ENCODE measurements at regions of chr5 and their contacts with region 1.

Region 1: DNA sequence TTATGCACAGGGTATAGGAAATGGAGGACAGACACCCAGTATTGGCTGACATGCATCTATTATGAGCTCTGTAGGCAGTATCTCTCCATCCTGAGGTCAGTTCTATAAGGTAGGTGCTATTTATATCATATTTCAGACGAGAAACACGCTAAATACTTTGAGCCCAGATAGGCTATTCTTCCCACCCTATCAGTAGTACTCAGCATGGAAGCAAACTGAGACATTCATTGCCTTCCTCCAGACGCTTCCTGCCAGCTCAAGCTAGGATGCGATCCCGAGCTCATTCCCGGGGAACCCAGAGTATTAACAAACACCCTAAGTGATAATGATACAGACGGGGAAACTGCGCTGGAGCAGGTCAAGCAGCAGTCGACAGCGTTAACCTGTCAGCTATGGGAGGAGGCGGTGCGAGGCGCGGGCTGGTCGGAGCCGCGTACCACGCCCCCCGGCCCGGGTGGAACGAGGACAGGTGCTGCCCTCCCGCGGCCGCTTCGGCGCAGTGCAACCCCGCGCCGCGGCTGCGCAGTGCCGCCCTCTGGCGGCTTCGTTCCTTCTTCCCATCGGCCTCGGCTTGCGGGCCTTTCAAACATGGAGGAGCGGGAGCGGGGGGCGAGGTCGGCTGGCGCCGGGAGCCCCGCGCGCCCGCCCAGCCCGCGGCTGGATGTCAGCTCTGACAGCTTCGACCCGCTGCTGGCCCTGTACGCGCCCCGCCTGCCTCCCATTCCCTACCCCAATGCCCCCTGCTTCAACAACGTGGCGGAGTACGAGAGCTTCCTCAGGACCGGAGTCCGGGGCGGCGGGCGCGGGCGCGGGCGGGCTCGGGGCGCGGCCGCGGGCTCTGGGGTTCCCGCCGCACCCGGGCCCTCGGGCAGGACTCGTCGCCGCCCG is at the start of gene LSM11:
- DNase-seq: peak; percentile 93
- ATAC-seq: peak; percentile 96
- H3K4me3 Mint-ChIP-seq: peak within 1 kb of the TSS; percentile 95
- H3K27ac Mint-ChIP-seq: peak within 1 kb of the TSS; percentile 87
- H3K4me1 Mint-ChIP-seq: peaks cover 36% of the 10 kb centered on the region
- H3K27me3 Mint-ChIP-seq: no peaks in the 10 kb centered on the region
- CTCF ChIP-seq: peak; percentile 98
- total RNA-seq, gene LSM11: 7.0 to 7.3 TPM

Region 2: DNA sequence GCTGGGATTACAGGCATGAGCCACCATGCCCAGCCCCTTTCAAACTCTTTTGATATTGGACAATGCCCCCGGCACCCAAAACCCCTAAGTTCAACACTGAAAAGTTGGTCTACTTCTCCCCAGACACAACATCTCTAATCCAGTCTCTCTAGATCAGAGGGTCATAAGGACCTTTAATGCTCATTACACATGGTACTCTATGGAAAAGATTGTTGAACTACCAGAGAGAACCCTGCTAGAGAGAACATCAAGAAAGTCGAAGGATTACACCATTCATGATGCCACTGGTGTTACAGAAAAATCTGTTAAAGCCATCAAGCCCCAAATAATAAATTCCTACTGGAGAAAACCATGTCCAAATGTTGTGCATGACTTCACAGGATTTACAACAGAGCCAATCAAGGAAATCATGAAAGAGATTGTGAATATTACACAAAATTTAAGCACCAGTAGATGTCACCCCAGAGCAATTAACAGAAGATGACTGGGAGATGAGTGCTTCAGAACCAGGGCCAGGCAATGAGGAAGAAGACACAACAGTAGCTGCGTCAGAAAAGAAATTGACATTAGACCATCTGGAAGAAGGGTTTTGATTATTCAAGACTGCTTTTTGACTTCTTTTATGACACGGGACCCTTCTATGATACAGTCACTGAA is 311.7 kb before region 1 on chr5:
- CTCF ChIA-PET with region 1: interaction called, 15 read pairs
- POLR2A ChIA-PET with region 1: no interaction called
- intact Hi-C with region 1: loop called (anchors 5 kb)
- DNase-seq: peak; percentile 37
- ATAC-seq: peak; percentile 87
- H3K4me3 Mint-ChIP-seq: no peak overlapping the region
- H3K27ac Mint-ChIP-seq: no peak overlapping the region
- H3K4me1 Mint-ChIP-seq: no peaks in the 10 kb centered on the region
- H3K27me3 Mint-ChIP-seq: peaks cover 12% of the 10 kb centered on the region
- CTCF ChIP-seq: peak; percentile 66

Region 3: GRCh38 chr5:157651623-157652549 is 91.5 kb before region 1 on chr5 and contains the start of gene SOX30:
- CTCF ChIA-PET with region 1: interaction called, 18 read pairs
- POLR2A ChIA-PET with region 1: no interaction called
- intact Hi-C with region 1: no loop called
- DNase-seq: peak; percentile 86
- ATAC-seq: peak; percentile 99
- H3K4me3 Mint-ChIP-seq: peak within 1 kb of the TSS; percentile 68
- H3K27ac Mint-ChIP-seq: peak within 1 kb of the TSS; percentile 79
- H3K4me1 Mint-ChIP-seq: peaks cover 10% of the 10 kb centered on the region
- H3K27me3 Mint-ChIP-seq: no peaks in the 10 kb centered on the region
- CTCF ChIP-seq: no peak
- total RNA-seq, gene SOX30: 0.11 to 0.16 TPM

Region 4: DNA sequence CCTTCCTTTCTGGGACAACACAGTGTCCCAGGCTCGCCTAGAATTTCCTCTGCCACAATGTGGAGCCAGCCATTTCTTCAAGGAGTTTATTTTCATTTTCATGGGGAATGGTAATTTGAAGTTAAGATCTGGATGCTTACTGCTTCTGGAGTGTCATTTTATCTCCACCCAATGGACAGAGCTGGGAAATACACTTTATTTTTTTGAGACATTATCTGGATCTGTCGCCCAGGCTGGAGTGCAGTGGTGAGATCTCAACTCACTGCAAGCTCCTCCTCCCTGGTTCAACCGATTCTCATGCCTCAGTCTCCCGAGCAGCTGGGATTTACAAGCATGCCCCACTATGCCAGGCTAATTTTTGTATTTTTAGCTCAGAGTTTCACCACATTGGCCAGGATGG is 24.9 kb before region 1 on chr5:
- CTCF ChIA-PET with region 1: interaction called, 37 read pairs
- POLR2A ChIA-PET with region 1: interaction called, 3 read pairs
- intact Hi-C with region 1: no loop called
- DNase-seq: peak; percentile 4
- ATAC-seq: peak; percentile 86
- H3K4me3 Mint-ChIP-seq: no peak overlapping the region
- H3K27ac Mint-ChIP-seq: no peak overlapping the region
- H3K4me1 Mint-ChIP-seq: peaks cover 4% of the 10 kb centered on the region
- H3K27me3 Mint-ChIP-seq: no peaks in the 10 kb centered on the region
- CTCF ChIP-seq: peak; percentile 54

Region 5: GRCh38 chr5:157756122-157756521 is 12.7 kb after region 1 on chr5:
- CTCF ChIA-PET with region 1: interaction called, 51 read pairs
- POLR2A ChIA-PET with region 1: interaction called, 6 read pairs
- intact Hi-C with region 1: no loop called
- DNase-seq: no peak
- ATAC-seq: no peak
- H3K4me3 Mint-ChIP-seq: no peak overlapping the region
- H3K27ac Mint-ChIP-seq: no peak overlapping the region
- H3K4me1 Mint-ChIP-seq: peaks cover 4% of the 10 kb centered on the region
- H3K27me3 Mint-ChIP-seq: no peaks in the 10 kb centered on the region
- CTCF ChIP-seq: no peak

Measured in activated CD8-positive, alpha-beta T cell treated with anti-CD3 and anti-CD28 coated beads for 36 hours (primary cell).